AG04449 (cell line): ENCODE measurements at regions of chr12 and their contacts with region 1.

Region 1: GRCh38 chr12:76810671-76811419 is 46.9 kb downstream of the ZDHHC17 start:
- DNase-seq: no peak
- H3K4me3 ChIP-seq: no peak overlapping the region
- CTCF ChIP-seq: no peak

Region 2: DNA sequence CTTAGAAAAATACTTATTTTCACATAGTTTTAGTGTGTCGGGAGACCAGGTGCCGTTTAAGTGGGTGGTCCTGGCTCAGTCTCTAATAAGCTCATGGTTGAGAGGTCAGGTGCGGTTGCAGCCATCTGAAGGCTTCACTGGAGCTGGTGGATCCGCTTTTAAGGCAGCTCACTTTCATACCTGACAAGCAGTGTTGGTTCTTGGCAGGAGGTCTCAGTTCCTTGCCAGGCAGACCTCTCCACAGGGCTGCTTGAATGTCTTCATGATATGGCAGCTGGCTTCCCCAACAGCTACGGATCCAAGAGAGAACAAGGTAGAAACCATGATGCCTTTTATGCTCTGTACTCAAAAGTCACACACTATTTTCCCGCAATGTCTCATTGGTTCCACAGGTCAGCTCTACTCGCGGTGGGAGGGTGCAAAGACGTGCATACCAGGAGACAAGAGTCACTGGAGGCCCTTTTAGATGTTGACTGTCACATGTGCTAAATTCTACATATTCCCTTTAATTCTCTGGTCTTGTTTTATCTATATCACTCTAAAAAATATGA is 54.9 kb before region 1 on chr12:
- CTCF ChIA-PET with region 1: no interaction called
- POLR2A ChIA-PET with region 1: no interaction called
- DNase-seq: no peak
- H3K4me3 ChIP-seq: no peak overlapping the region
- CTCF ChIP-seq: no peak

Region 3: GRCh38 chr12:76820888-76821482 is 10.1 kb after region 1 on chr12:
- CTCF ChIA-PET with region 1: interaction called, 18 read pairs
- POLR2A ChIA-PET with region 1: interaction called, 3 read pairs
- DNase-seq: no peak
- H3K4me3 ChIP-seq: no peak overlapping the region
- CTCF ChIP-seq: peak; percentile 72

Region 4: DNA sequence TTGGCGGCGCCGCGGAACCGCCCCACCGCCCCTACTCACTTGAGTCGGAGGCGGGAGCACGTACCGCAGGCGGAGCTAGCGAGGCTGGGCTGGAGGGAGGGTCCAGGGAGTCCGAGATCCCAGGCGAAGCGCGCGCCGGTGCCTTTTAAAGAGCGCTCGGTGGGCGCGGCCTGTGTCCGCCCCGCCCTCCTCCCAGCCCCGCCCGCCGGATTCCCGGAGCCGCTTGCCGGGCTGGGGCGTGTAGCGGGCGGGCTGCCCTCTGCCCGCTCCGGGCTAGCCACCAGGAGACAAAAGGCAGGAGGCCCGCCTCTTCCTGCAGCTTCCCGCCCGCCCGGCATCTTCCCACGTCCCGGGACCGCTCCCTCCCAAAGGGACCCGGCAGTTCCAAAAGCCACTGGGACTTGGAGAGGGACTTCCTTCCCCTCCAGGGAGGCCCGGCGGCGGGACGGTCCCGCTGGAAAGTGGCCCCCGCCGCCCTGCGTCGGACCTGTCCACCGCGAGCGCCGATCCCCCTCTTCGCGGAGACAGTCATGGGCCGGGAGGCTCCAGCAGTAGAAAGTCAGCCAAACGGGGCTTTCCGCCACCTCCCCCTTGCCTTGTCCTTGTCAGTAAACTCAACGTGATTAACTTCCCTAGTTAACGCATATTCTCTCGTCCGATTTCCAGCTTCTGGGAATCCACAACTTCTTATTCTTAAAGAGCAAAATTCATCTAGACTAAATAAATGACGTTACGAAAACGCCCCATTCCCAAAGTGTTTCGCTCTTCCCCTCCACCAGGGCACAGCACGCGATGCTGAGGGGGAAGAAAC is 68.3 kb after region 1 on chr12 and contains the start of gene CSRP2:
- CTCF ChIA-PET with region 1: no interaction called
- POLR2A ChIA-PET with region 1: no interaction called
- DNase-seq: no peak
- H3K4me3 ChIP-seq: peak within 1 kb of the TSS; percentile 80
- CTCF ChIP-seq: peak; percentile 20